Colonic mucosa (tissue), 4 donors: ENCODE measurements at regions of chr19 and their contacts with region 1.

Region 1: DNA sequence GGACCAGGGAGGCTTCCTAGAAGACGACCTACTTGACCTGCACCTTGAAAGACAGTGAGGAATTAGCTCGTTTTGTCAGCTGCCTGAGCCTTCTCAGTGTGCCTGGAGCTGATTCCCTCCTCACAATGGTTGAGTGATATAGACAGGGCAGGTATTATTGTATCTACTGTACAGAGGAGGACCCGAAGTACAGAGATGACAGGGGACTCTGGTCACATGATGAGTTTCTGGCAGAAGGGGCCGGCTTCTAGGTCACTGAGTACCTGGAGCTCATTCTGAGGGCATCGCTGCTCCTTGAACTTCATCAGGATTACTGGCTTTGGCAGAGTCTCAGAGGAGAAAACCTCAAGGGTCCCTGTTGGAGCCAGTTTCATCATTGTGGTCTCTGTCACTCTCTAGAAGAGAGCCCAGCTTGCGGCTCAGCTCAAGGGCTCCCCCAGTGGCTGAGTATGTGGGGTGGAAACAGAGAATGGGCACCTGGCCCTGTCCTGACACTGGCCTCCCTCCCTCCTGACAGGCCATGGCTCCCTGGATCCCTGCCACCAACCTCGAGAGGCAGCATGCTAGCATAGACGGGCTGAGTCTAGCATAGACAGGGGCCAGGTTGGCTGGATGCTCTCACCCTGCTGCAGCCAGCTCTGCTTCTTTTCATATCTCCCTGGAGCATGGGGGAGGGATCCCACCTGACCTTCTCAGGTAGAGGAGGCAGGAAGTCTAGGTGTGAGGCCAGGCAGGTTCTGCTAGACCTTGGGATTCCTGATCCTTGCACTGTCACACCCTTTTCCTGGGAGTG is 38.7 kb downstream of the NFIX start:
- DNase-seq: peak; percentile 89
- H3K4me3 ChIP-seq: no peak overlapping the region
- H3K27ac ChIP-seq: peak overlapping the region; percentile 84
- H3K4me1 ChIP-seq: peaks cover 32% of the 10 kb centered on the region
- H3K27me3 ChIP-seq: no peaks in the 10 kb centered on the region
- CTCF ChIP-seq: peak; percentile 80

Region 2: DNA sequence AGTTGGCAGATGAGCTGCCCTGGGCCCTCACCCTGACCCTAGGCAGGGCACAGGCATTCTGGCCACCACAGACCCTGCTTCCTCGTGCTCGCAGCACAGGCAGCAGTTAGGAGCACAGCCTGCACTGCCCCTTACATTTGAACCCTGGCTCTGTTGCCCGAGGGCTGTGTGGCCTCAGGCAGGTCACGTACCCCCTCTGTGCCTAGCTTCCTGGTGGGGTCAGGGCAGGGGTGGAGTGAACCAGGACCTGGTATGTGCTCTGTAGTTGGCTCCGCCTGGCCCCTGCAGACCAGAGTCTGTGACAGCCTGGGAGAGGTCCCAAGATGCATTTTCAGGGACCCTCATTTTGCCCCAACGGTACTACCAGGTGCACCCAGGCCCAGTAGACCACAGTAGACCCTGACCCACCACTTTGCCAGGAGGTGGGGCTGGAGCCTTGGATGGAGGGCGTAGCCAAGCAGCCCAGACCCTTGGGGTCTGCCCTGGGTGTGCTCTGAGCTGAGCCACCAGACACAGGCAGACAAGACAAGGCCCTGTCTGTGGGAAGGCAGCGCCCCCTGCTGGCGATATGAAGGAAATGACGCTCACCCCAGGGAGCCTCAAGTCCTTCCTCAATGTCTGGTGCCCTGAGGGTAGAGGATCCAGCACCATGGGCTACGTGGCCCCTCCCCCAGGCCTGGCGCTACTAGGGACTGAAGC is 59.5 kb after region 1 on chr19:
- intact Hi-C with region 1: loop called (anchors 10 kb)
- DNase-seq: peak; percentile 86
- H3K4me3 ChIP-seq: no peak overlapping the region
- H3K27ac ChIP-seq: no peak overlapping the region
- H3K4me1 ChIP-seq: peaks cover 10% of the 10 kb centered on the region
- H3K27me3 ChIP-seq: no peaks in the 10 kb centered on the region
- CTCF ChIP-seq: peak; percentile 92